Adrenal gland (tissue), 19 donors: ENCODE measurements at regions of chr9 and their contacts with region 1.

Region 1: GRCh38 chr9:121819428-121820231 is 168.2 kb downstream of the DAB2IP start:
- DNase-seq: no peak
- H3K4me3 ChIP-seq: no peak overlapping the region
- H3K27ac ChIP-seq: no peak overlapping the region
- H3K4me1 ChIP-seq: no peaks in the 10 kb centered on the region
- H3K27me3 ChIP-seq: no peaks in the 10 kb centered on the region
- CTCF ChIP-seq: no peak
- POLR2A ChIP-seq: no peak

Region 2: GRCh38 chr9:121876658-121877271 is 57.1 kb after region 1 on chr9:
- intact Hi-C with region 1: loop called in 1 of 2 experiments (anchors 10 kb)
- DNase-seq: peak in 5 of 7 donors; percentile 28 to 65 (median 50)
- H3K4me3 ChIP-seq: no peak overlapping the region
- H3K27ac ChIP-seq: no peak overlapping the region
- H3K4me1 ChIP-seq: no peaks in the 10 kb centered on the region
- H3K27me3 ChIP-seq: no peaks in the 10 kb centered on the region
- CTCF ChIP-seq: no peak
- POLR2A ChIP-seq: no peak